ENCODE measurements at regions of chr19 and their contacts with region 1.

Region 1: GRCh38 chr19:37594304-37594981 is at the starts of genes ZNF540 and ZNF571:
- DNase-seq: peak; percentile 70 to 95 (median 92)
- ATAC-seq: peak; percentile 96
- H3K4me3 ChIP-seq: peak within 1 kb of the TSS; percentile 80
- H3K4me3 Mint-ChIP-seq: peak within 1 kb of the TSS; percentile 94 to 100 (median 98)
- H3K27ac ChIP-seq: peak within 1 kb of the TSS; percentile 93
- H3K27ac Mint-ChIP-seq: peak within 1 kb of the TSS; percentile 93 to 100 (median 99)
- H3K4me1 ChIP-seq: peaks cover 7 to 18% of the 10 kb centered on the region in 2 donors
- H3K4me1 Mint-ChIP-seq: peaks cover 13 to 56% (median 39%) of the 10 kb centered on the region in 7 donors
- H3K27me3 ChIP-seq: no peaks in the 10 kb centered on the region
- H3K27me3 Mint-ChIP-seq: no peaks in the 10 kb centered on the region
- total RNA-seq, gene ZNF540: 0.99 to 22.7 (median 17.6) TPM
- total RNA-seq, gene ZNF571: 1.5 to 12.4 (median 9.0) TPM

Region 2: DNA sequence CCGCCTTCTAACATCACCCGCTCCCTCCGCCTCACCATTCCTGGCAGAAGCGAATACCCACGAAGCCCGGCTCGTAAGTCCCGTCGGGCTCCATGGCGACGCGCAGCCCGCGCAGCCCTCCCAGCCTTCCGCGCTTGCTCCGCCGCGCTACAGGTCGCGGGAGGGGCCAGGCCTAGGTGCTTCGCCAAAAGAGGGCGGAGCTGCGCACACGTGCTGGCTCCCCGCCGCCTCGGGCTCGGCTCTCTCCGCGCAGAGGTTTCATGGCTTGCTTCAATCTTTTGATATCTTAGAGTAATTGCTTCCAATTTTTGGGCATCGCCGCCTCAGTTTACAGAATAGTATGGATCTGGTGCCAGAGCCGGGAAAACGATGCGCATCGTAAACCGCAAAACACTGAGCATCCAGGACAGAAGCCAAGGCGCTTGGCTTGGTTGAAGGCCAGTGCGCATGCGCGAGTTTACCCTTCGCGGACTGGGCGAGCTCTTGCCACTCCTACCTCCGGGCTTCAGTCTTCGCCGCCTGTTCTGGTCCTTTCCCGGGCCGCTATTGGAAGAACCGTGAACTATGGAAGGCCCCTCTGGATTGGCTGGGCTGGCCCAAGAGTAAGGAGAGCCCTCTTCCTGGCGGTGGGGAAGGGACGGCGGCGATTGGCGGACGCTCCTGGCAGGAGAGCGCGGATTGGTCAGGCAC is 1479.5 kb before region 1 on chr19 and contains the start of gene POLR2I:
- CTCF ChIA-PET with region 1: no interaction called
- POLR2A ChIA-PET with region 1: no interaction called
- intact Hi-C with region 1: loop called in 1 of 2 experiments (anchors 10 kb)
- DNase-seq: peak; percentile 95 to 100 (median 99)
- ATAC-seq: peak; percentile 92
- H3K4me3 ChIP-seq: peak within 1 kb of the TSS; percentile 97
- H3K4me3 Mint-ChIP-seq: peak within 1 kb of the TSS; percentile 89 to 98 (median 96)
- H3K27ac ChIP-seq: peak within 1 kb of the TSS; percentile 90
- H3K27ac Mint-ChIP-seq: peak within 1 kb of the TSS; percentile 97 to 99 (median 98)
- H3K4me1 ChIP-seq: peaks cover 14 to 15% of the 10 kb centered on the region in 2 donors
- H3K4me1 Mint-ChIP-seq: peaks cover 27 to 54% (median 42%) of the 10 kb centered on the region in 7 donors
- H3K27me3 ChIP-seq: no peaks in the 10 kb centered on the region
- H3K27me3 Mint-ChIP-seq: peaks cover 0 to 5% (median 0%) of the 10 kb centered on the region in 5 donors
- total RNA-seq, gene POLR2I: 20.9 to 56.7 (median 44.7) TPM

Region 3: GRCh38 chr19:36796076-36796992 is 798.1 kb before region 1 on chr19:
- CTCF ChIA-PET with region 1: no interaction called
- POLR2A ChIA-PET with region 1: no interaction called
- intact Hi-C with region 1: loop called in 1 of 2 experiments (anchors 5 kb)
- DNase-seq: no peak
- ATAC-seq: no peak
- H3K4me3 ChIP-seq: peak overlapping the region; percentile 100
- H3K4me3 Mint-ChIP-seq: peak overlapping the region; percentile 87 to 99 (median 98)
- H3K27ac ChIP-seq: peak overlapping the region; percentile 79
- H3K27ac Mint-ChIP-seq: peak overlapping the region; percentile 87 to 100 (median 98)
- H3K4me1 ChIP-seq: no peaks in the 10 kb centered on the region
- H3K4me1 Mint-ChIP-seq: peaks cover 0 to 28% (median 16%) of the 10 kb centered on the region in 7 donors
- H3K27me3 ChIP-seq: no peaks in the 10 kb centered on the region
- H3K27me3 Mint-ChIP-seq: peaks cover 0 to 10% (median 9%) of the 10 kb centered on the region in 5 donors

Region 4: GRCh38 chr19:37506387-37507166 is 87.9 kb before region 1 on chr19 and contains the start of gene ZNF793:
- CTCF ChIA-PET with region 1: no interaction called
- POLR2A ChIA-PET with region 1: interaction called, 11 read pairs
- intact Hi-C with region 1: loop called in 1 of 2 experiments (anchors 1 kb)
- DNase-seq: peak; percentile 33 to 88 (median 83)
- ATAC-seq: peak; percentile 90
- H3K4me3 ChIP-seq: peak within 1 kb of the TSS; percentile 83
- H3K4me3 Mint-ChIP-seq: no peak within 1 kb of the TSS
- H3K27ac ChIP-seq: peak within 1 kb of the TSS; percentile 90
- H3K27ac Mint-ChIP-seq: no peak within 1 kb of the TSS
- H3K4me1 ChIP-seq: peaks cover 0 to 14% of the 10 kb centered on the region in 2 donors
- H3K4me1 Mint-ChIP-seq: peaks cover 0 to 2% (median 0%) of the 10 kb centered on the region in 7 donors
- H3K27me3 ChIP-seq: no peaks in the 10 kb centered on the region
- H3K27me3 Mint-ChIP-seq: peaks cover 0 to 5% (median 0%) of the 10 kb centered on the region in 5 donors
- total RNA-seq, gene ZNF793: 1.1 to 11.7 (median 6.0) TPM

Region 5: DNA sequence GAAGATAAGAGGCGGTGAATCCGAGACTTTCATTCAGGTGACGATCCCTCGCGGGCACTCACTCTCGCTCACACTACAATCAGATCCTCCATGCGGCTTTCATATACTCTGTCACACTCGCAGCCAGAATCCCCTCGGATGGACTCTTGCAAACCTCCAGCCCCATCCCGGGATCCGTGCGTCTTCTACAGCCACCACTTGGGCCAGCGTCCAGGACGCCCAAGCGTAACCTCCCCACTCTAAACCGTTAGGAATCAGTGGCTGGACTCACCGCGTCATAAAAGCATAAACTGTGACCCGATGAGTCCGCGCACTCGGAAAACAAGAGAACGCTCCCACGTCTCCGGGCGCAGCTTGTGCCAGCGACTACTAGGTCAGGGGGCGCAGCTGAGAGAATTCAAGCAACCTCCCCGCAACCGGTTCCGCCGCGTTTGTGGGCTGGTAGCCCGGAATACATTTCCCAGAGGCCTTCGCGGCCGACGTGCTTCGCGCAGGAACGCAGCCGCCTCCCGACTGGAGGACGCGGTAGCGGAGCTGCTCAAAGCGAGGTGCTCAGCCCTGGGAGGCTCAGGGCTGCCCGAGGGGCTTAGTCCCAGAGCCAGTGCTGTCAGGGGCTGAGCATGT is 97.5 kb after region 1 on chr19:
- CTCF ChIA-PET with region 1: no interaction called
- POLR2A ChIA-PET with region 1: interaction called, 10 read pairs
- intact Hi-C with region 1: loop called in 1 of 2 experiments (anchors 1 kb)
- DNase-seq: peak; percentile 52 to 83 (median 73)
- ATAC-seq: peak; percentile 97
- H3K4me3 ChIP-seq: peak overlapping the region; percentile 95
- H3K4me3 Mint-ChIP-seq: peak overlapping the region; percentile 83 to 98 (median 96)
- H3K27ac ChIP-seq: peak overlapping the region; percentile 82
- H3K27ac Mint-ChIP-seq: peak overlapping the region; percentile 69 to 98 (median 96)
- H3K4me1 ChIP-seq: peaks cover 0 to 4% of the 10 kb centered on the region in 2 donors
- H3K4me1 Mint-ChIP-seq: peaks cover 5 to 17% (median 11%) of the 10 kb centered on the region in 7 donors
- H3K27me3 ChIP-seq: no peaks in the 10 kb centered on the region
- H3K27me3 Mint-ChIP-seq: no peaks in the 10 kb centered on the region

Region 6: DNA sequence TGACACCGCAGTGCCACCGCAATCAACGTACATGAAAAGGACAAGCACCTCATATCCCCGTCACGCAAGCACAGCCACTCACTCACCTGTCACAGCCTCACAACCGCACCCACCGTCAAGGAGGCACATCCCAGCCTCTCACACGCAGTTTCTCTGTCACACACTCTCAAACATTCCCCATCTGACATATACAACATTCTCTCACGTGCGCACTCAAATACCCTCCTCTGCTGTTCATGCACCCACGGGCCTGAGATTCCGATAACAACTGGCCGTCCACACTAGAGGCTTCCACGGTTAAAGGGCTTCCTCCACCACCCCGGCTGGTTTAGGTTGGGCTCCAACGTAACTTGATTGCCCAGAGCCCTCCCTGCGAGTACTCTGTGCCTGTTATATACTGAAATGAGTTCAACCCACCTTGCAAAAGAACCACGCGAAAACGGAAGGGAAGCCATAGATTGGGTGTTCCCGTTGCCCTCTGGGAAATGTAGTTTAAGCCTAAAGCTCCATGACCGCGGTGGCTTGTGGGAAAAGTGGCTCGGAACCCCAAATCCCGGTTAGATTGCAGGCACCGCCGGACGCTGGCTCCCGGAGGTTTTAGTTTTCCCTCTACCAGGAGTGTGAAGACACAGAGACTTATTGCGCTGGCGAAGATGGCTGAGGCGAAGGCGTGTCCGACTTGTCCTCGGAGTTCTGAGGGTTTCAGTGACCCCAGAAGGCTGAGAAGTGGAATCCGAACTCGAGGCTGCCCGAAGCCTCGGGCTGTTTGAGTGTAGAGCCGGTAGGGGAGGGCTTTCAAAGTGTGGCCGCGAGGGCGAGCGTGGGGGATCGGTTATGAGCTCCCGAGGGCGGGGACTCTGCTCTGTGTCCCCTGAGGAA is 184.9 kb after region 1 on chr19 and contains the start of gene ZNF573:
- CTCF ChIA-PET with region 1: no interaction called
- POLR2A ChIA-PET with region 1: interaction called, 8 read pairs
- intact Hi-C with region 1: loop called (anchors 1 kb)
- DNase-seq: peak; percentile 62 to 99 (median 94)
- ATAC-seq: peak; percentile 94
- H3K4me3 ChIP-seq: peak within 1 kb of the TSS; percentile 82
- H3K4me3 Mint-ChIP-seq: peak within 1 kb of the TSS; percentile 91 to 98 (median 96)
- H3K27ac ChIP-seq: peak within 1 kb of the TSS; percentile 99
- H3K27ac Mint-ChIP-seq: peak within 1 kb of the TSS; percentile 89 to 100 (median 98)
- H3K4me1 ChIP-seq: peaks cover 6% of the 10 kb centered on the region in 2 donors
- H3K4me1 Mint-ChIP-seq: peaks cover 9 to 53% (median 48%) of the 10 kb centered on the region in 7 donors
- H3K27me3 ChIP-seq: no peaks in the 10 kb centered on the region
- H3K27me3 Mint-ChIP-seq: no peaks in the 10 kb centered on the region
- total RNA-seq, gene ZNF573: 5.9 to 43.8 (median 16.6) TPM

Measured in naive thymus-derived CD4-positive, alpha-beta T cell (primary cell).